Heart right ventricle (tissue), 16 donors: ENCODE measurements at regions of chr1 and their contacts with region 1.

Region 1: GRCh38 chr1:101161619-101162018 is 75.2 kb upstream of the S1PR1 start:
- DNase-seq: no peak
- ATAC-seq: peak; percentile 47 to 87 (median 80)
- H3K4me3 ChIP-seq: no peak overlapping the region
- H3K27ac ChIP-seq: peak overlapping the region; percentile 40 to 81 (median 72)
- H3K4me1 ChIP-seq: peaks cover 0 to 52% (median 23%) of the 10 kb centered on the region in 9 donors
- H3K27me3 ChIP-seq: no peaks in the 10 kb centered on the region
- CTCF ChIP-seq: no peak

Region 2: GRCh38 chr1:101112051-101112780 is 49.4 kb before region 1 on chr1:
- intact Hi-C with region 1: loop called in 1 of 10 experiments (anchors 1 kb)
- DNase-seq: peak; percentile 48 to 61
- ATAC-seq: peak; percentile 83 to 95 (median 91)
- H3K4me3 ChIP-seq: no peak overlapping the region
- H3K27ac ChIP-seq: peak overlapping the region; percentile 20 to 81 (median 67)
- H3K4me1 ChIP-seq: peaks cover 0 to 38% (median 26%) of the 10 kb centered on the region in 9 donors
- H3K27me3 ChIP-seq: no peaks in the 10 kb centered on the region
- CTCF ChIP-seq: no peak

Region 3: GRCh38 chr1:101150670-101151069 is 10.9 kb before region 1 on chr1:
- intact Hi-C with region 1: loop called in 1 of 10 experiments (anchors 1 kb)
- DNase-seq: no peak
- ATAC-seq: no peak
- H3K4me3 ChIP-seq: no peak overlapping the region
- H3K27ac ChIP-seq: peak overlapping the region in 7 of 10 donors; percentile 49 to 78 (median 61)
- H3K4me1 ChIP-seq: peaks cover 0 to 41% (median 20%) of the 10 kb centered on the region in 9 donors
- H3K27me3 ChIP-seq: no peaks in the 10 kb centered on the region
- CTCF ChIP-seq: no peak

Region 4: GRCh38 chr1:101309334-101310311 is 148.0 kb after region 1 on chr1:
- intact Hi-C with region 1: no loop called
- DNase-seq: peak; percentile 32 to 38
- ATAC-seq: peak; percentile 55 to 86 (median 74)
- H3K4me3 ChIP-seq: peak overlapping the region in 9 of 10 donors; percentile 6 to 58 (median 50)
- H3K27ac ChIP-seq: peak overlapping the region in 1 of 10 donors; percentile 82
- H3K4me1 ChIP-seq: peaks cover 0 to 36% (median 10%) of the 10 kb centered on the region in 9 donors
- H3K27me3 ChIP-seq: peaks cover 0 to 6% (median 0%) of the 10 kb centered on the region in 7 donors
- CTCF ChIP-seq: peak; percentile 70 to 88 (median 81)